ENCODE measurements at regions of chr22 and their contacts with region 1.

Region 1: GRCh38 chr22:42324990-42325710 is 54.7 kb upstream of the TCF20 start:
- DNase-seq: no peak
- ATAC-seq: peak in 5 of 8 donors; percentile 8 to 42 (median 30)
- H3K4me3 ChIP-seq: no peak overlapping the region
- H3K27ac ChIP-seq: no peak overlapping the region
- H3K4me1 ChIP-seq: peaks cover 0 to 10% (median 7%) of the 10 kb centered on the region in 9 donors
- H3K27me3 ChIP-seq: no peaks in the 10 kb centered on the region
- CTCF ChIP-seq: no peak

Region 2: GRCh38 chr22:42388130-42388797 is 63.1 kb after region 1 on chr22:
- intact Hi-C with region 1: loop called in 1 of 10 experiments (anchors 10 kb)
- DNase-seq: no peak
- ATAC-seq: no peak
- H3K4me3 ChIP-seq: no peak overlapping the region
- H3K27ac ChIP-seq: no peak overlapping the region
- H3K4me1 ChIP-seq: no peaks in the 10 kb centered on the region
- H3K27me3 ChIP-seq: peaks cover 0 to 4% (median 0%) of the 10 kb centered on the region in 7 donors
- CTCF ChIP-seq: no peak

Region 3: GRCh38 chr22:42655693-42656092 is 330.5 kb after region 1 on chr22:
- intact Hi-C with region 1: no loop called
- DNase-seq: no peak
- ATAC-seq: no peak
- H3K4me3 ChIP-seq: no peak overlapping the region
- H3K27ac ChIP-seq: no peak overlapping the region
- H3K4me1 ChIP-seq: no peaks in the 10 kb centered on the region
- H3K27me3 ChIP-seq: no peaks in the 10 kb centered on the region
- CTCF ChIP-seq: no peak